ENCODE measurements at regions of chr20 and their contacts with region 1.

Region 1: GRCh38 chr20:57022312-57022711 is 244.1 kb downstream of the BMP7 start:
- DNase-seq: peak; percentile 74
- ATAC-seq: peak; percentile 99
- H3K4me3 Mint-ChIP-seq: no peak overlapping the region
- H3K27ac Mint-ChIP-seq: no peak overlapping the region
- H3K4me1 Mint-ChIP-seq: peaks cover 33% of the 10 kb centered on the region
- H3K27me3 Mint-ChIP-seq: peaks cover 8% of the 10 kb centered on the region; the same call in 1 of the 2 replicates
- CTCF ChIP-seq: no peak; the same call in 1 of the 2 replicates

Region 2: GRCh38 chr20:57003012-57003411 is 19.3 kb before region 1 on chr20:
- CTCF ChIA-PET with region 1: interaction called, 17 read pairs
- POLR2A ChIA-PET with region 1: no interaction called
- DNase-seq: no peak
- ATAC-seq: 0 out of 2 replicates have a peak, but pooled peaks have one; percentile 22
- H3K4me3 Mint-ChIP-seq: no peak overlapping the region
- H3K27ac Mint-ChIP-seq: no peak overlapping the region
- H3K4me1 Mint-ChIP-seq: peaks cover 6% of the 10 kb centered on the region
- H3K27me3 Mint-ChIP-seq: peaks cover 6% of the 10 kb centered on the region
- CTCF ChIP-seq: no peak

Region 3: GRCh38 chr20:57043091-57043490 is 20.8 kb after region 1 on chr20:
- CTCF ChIA-PET with region 1: interaction called, 10 read pairs
- POLR2A ChIA-PET with region 1: no interaction called
- DNase-seq: no peak
- ATAC-seq: no peak
- H3K4me3 Mint-ChIP-seq: no peak overlapping the region
- H3K27ac Mint-ChIP-seq: no peak overlapping the region
- H3K4me1 Mint-ChIP-seq: peaks cover 7% of the 10 kb centered on the region; the same call in 1 of the 2 replicates
- H3K27me3 Mint-ChIP-seq: no peaks in the 10 kb centered on the region; the same call in 1 of the 2 replicates
- CTCF ChIP-seq: no peak

Region 4: GRCh38 chr20:57148263-57148662 is 126.0 kb after region 1 on chr20:
- CTCF ChIA-PET with region 1: no interaction called
- POLR2A ChIA-PET with region 1: no interaction called
- DNase-seq: no peak
- ATAC-seq: no peak
- H3K4me3 Mint-ChIP-seq: no peak overlapping the region
- H3K27ac Mint-ChIP-seq: no peak overlapping the region
- H3K4me1 Mint-ChIP-seq: peaks cover 2% of the 10 kb centered on the region; the same call in 1 of the 2 replicates
- H3K27me3 Mint-ChIP-seq: peaks cover 4% of the 10 kb centered on the region; the same call in 1 of the 2 replicates
- CTCF ChIP-seq: no peak

Measured in WTC11 (cell line).